ENCODE measurements at regions of chr3 and their contacts with region 1.

Region 1: DNA sequence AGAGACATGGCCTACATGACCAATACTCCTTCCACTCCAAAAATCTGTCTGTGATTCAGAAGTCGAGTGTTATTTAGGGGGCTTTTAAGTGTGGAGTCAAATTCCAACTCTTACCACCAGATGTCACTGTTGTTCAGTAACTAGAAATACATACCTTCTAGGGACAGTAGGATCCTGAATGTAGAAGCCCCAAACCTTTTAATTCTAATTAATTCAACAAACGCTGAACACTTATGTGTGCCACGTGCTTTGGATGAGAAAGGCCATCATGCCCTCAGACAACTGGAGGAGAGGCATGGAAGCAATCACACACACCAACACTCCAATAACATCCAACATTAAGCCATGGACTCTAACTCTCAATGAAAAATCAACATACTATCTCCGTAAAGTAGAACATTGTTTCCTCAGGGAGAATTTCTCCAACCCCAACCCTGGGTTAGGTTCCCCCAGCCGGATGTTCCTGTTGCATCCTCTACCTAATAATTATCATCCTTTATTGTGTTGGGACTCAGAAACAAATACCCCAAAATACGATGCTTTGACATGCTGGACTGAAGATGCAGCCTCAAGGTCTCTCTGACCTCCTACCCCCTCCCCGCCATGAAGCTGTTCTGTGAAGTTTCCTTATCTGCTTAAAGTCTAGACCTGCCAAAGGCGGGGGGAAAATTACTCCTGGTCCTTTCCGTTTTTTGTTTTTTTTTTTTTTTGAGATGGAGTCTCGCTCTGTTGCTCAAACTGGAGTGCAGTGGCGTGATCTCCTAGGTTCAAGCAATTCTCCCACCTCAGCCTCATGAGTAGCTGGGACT is 8.0 kb upstream of the CCDC13 start:
- DNase-seq: peak; percentile 57
- H3K4me3 ChIP-seq: no peak overlapping the region
- H3K27ac ChIP-seq: no peak overlapping the region
- H3K4me1 ChIP-seq: no peaks in the 10 kb centered on the region
- H3K27me3 ChIP-seq: no peaks in the 10 kb centered on the region
- CTCF ChIP-seq: peak; percentile 59

Region 2: GRCh38 chr3:42535981-42536790 is 244.9 kb before region 1 on chr3:
- CTCF ChIA-PET with region 1: no interaction called
- POLR2A ChIA-PET with region 1: no interaction called
- intact Hi-C with region 1: no loop called
- DNase-seq: peak; percentile 32
- H3K4me3 ChIP-seq: no peak overlapping the region
- H3K27ac ChIP-seq: no peak overlapping the region
- H3K4me1 ChIP-seq: no peaks in the 10 kb centered on the region
- H3K27me3 ChIP-seq: no peaks in the 10 kb centered on the region
- CTCF ChIP-seq: peak; percentile 43

Region 3: DNA sequence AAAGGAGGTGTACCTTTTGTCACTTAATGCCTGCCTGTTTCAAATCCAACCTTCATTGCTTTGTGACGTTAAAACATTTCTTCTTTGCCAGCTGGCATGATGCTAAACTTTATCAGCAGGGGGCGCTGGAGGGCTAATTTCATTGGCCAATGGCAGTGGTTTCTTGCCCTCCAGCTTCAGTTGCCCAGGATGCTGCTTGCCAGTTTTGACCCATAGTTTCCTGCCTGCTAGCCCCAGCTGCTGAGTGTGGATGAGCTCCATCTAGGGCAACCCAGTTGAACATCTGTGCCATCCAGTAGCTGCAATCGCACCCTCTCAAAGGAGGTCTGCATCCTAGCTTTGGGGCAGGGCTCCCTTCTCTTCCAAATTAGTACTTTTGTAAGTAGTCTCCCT is 50.2 kb after region 1 on chr3:
- CTCF ChIA-PET with region 1: no interaction called
- POLR2A ChIA-PET with region 1: no interaction called
- intact Hi-C with region 1: loop called (anchors 5 kb)
- DNase-seq: peak; percentile 58
- H3K4me3 ChIP-seq: no peak overlapping the region
- H3K27ac ChIP-seq: no peak overlapping the region
- H3K4me1 ChIP-seq: no peaks in the 10 kb centered on the region
- H3K27me3 ChIP-seq: no peaks in the 10 kb centered on the region
- CTCF ChIP-seq: peak; percentile 63

Region 4: GRCh38 chr3:42880601-42881451 is 99.7 kb after region 1 on chr3:
- CTCF ChIA-PET with region 1: no interaction called
- POLR2A ChIA-PET with region 1: no interaction called
- intact Hi-C with region 1: loop called (anchors 1 kb)
- DNase-seq: peak; percentile 79
- H3K4me3 ChIP-seq: peak overlapping the region; percentile 45
- H3K27ac ChIP-seq: no peak overlapping the region
- H3K4me1 ChIP-seq: no peaks in the 10 kb centered on the region
- H3K27me3 ChIP-seq: no peaks in the 10 kb centered on the region
- CTCF ChIP-seq: peak; percentile 71

Measured in A673 (cell line).